WTC11 (cell line): ENCODE measurements at regions of chr1 and their contacts with region 1.

Region 1: GRCh38 chr1:204446370-204447111 is 34.9 kb upstream of the PPP1R15B start:
- DNase-seq: peak; percentile 90
- ATAC-seq: peak; percentile 88
- H3K4me3 Mint-ChIP-seq: no peak overlapping the region
- H3K27ac Mint-ChIP-seq: peak overlapping the region; percentile 84
- H3K4me1 Mint-ChIP-seq: peaks cover 35% of the 10 kb centered on the region
- H3K27me3 Mint-ChIP-seq: no peaks in the 10 kb centered on the region
- CTCF ChIP-seq: peak; percentile 57

Region 2: GRCh38 chr1:204417231-204417997 is 29.1 kb before region 1 on chr1:
- CTCF ChIA-PET with region 1: interaction called, 14 read pairs
- POLR2A ChIA-PET with region 1: no interaction called
- DNase-seq: no peak
- ATAC-seq: no peak
- H3K4me3 Mint-ChIP-seq: no peak overlapping the region
- H3K27ac Mint-ChIP-seq: peak overlapping the region; percentile 75
- H3K4me1 Mint-ChIP-seq: peaks cover 17% of the 10 kb centered on the region
- H3K27me3 Mint-ChIP-seq: no peaks in the 10 kb centered on the region
- CTCF ChIP-seq: no peak

Region 3: DNA sequence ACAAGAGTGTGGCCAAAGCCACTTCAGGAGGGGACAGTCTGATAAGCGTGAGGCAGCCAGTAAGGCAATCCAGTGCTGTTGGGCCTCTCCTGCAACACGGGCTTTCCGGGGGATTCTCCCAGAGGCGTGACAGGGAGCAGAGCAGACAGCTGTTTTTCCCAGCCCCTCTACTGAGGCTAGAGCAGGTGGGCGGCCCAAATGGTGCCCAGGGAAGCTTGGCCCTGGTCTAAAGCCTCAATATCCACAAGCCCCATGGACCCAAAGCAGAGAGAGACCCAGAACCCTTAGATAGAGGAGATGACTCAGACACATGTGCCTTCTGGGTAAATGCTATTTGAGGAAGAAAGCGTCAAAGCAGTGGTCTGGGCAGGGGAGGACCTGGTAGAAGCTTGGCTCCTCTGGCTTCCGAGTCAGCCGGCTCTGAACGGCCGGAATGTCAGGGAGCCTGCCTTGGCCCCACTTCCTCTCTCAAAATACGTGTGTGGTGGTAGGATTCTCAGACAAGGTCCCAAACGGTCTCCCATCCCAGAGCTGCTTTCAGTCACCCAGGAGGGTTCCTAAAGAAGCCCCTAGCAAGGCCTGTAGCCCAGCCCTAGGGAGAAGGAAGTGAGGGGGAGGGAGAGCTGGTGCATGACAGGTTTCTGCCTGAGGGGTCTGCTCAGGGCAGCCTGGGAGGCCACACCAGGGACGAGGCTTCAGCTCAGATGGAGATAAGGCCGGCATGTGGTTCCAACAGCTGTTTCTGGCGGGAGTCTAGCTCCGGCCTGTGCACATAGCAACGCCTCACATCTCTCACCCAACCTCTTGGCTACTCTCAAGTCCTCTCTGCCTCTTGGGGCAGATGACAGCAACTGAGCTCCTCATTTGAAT is 19.2 kb after region 1 on chr1:
- CTCF ChIA-PET with region 1: interaction called, 63 read pairs
- POLR2A ChIA-PET with region 1: no interaction called
- DNase-seq: no peak
- ATAC-seq: no peak
- H3K4me3 Mint-ChIP-seq: no peak overlapping the region
- H3K27ac Mint-ChIP-seq: peak overlapping the region; percentile 54; the same call in 1 of the 2 replicates
- H3K4me1 Mint-ChIP-seq: peaks cover 11% of the 10 kb centered on the region; the same call in 1 of the 2 replicates
- H3K27me3 Mint-ChIP-seq: no peaks in the 10 kb centered on the region
- CTCF ChIP-seq: no peak

Region 4: DNA sequence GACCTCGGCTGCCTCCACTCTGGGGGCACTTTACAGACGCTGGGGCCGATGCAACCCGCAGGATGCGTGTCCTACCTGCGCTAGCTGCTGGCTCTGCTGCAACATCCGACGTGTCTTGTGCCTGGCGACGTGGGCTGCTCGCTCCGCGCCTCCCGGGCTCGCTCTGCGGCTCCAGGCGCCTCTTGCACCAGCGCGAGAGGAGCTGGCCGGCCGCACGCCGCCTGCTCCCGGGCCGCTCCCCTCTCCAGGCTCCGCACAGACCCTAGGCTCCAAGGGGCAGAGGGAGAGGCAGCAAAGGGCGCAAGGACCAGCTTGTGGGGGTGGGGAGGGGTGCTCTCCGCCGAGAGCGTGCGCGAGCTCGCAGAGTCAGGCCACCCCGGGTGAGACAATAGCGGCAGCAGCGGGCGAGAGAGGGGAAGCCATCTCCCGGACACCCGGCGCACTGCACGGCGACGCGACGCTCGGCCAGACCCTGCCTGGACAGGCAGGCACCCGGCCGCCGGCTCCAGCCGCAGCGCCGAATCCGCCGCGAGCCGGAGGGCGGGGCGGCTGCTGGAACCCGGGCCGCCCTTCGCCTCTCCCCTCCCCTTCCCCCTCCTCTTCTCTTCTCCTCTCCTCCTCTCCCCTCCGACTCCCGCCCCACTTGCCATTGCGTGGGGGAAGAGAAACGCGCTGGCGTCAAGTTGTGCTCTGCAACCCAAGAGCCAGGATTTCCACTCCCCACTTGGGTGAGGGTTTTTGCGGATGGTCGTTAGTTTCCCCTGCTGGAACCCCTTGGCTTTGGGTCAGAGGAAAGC is 47.9 kb after region 1 on chr1 and contains the start of gene PIK3C2B:
- CTCF ChIA-PET with region 1: interaction called, 906 read pairs
- POLR2A ChIA-PET with region 1: interaction called, 27 read pairs
- DNase-seq: peak; percentile 86
- ATAC-seq: peak; percentile 91
- H3K4me3 Mint-ChIP-seq: peak within 1 kb of the TSS; percentile 93
- H3K27ac Mint-ChIP-seq: peak within 1 kb of the TSS; percentile 64
- H3K4me1 Mint-ChIP-seq: peaks cover 33% of the 10 kb centered on the region
- H3K27me3 Mint-ChIP-seq: peaks cover 5% of the 10 kb centered on the region
- CTCF ChIP-seq: no peak
- total RNA-seq, gene PIK3C2B: 20.8 to 27.7 TPM (median 22.6 TPM) in 3 replicates

Region 5: GRCh38 chr1:204565617-204566582 is 119.4 kb after region 1 on chr1:
- CTCF ChIA-PET with region 1: interaction called, 11 read pairs
- POLR2A ChIA-PET with region 1: no interaction called
- DNase-seq: peak; percentile 40
- ATAC-seq: peak; percentile 85
- H3K4me3 Mint-ChIP-seq: peak overlapping the region; percentile 53
- H3K27ac Mint-ChIP-seq: peak overlapping the region; percentile 71
- H3K4me1 Mint-ChIP-seq: peaks cover 54% of the 10 kb centered on the region
- H3K27me3 Mint-ChIP-seq: peaks cover 6% of the 10 kb centered on the region
- CTCF ChIP-seq: peak; percentile 68

Region 6: GRCh38 chr1:204924013-204924967 is 477.7 kb after region 1 on chr1:
- CTCF ChIA-PET with region 1: no interaction called
- POLR2A ChIA-PET with region 1: no interaction called
- DNase-seq: peak; percentile 57
- ATAC-seq: peak; percentile 84
- H3K4me3 Mint-ChIP-seq: peak overlapping the region; percentile 25
- H3K27ac Mint-ChIP-seq: peak overlapping the region; percentile 96
- H3K4me1 Mint-ChIP-seq: peaks cover 82% of the 10 kb centered on the region
- H3K27me3 Mint-ChIP-seq: peaks cover 2% of the 10 kb centered on the region; the same call in 1 of the 2 replicates
- CTCF ChIP-seq: no peak